Gastrocnemius medialis (tissue), 4 donors: ENCODE measurements at regions of chr17 and their contacts with region 1.

Region 1: DNA sequence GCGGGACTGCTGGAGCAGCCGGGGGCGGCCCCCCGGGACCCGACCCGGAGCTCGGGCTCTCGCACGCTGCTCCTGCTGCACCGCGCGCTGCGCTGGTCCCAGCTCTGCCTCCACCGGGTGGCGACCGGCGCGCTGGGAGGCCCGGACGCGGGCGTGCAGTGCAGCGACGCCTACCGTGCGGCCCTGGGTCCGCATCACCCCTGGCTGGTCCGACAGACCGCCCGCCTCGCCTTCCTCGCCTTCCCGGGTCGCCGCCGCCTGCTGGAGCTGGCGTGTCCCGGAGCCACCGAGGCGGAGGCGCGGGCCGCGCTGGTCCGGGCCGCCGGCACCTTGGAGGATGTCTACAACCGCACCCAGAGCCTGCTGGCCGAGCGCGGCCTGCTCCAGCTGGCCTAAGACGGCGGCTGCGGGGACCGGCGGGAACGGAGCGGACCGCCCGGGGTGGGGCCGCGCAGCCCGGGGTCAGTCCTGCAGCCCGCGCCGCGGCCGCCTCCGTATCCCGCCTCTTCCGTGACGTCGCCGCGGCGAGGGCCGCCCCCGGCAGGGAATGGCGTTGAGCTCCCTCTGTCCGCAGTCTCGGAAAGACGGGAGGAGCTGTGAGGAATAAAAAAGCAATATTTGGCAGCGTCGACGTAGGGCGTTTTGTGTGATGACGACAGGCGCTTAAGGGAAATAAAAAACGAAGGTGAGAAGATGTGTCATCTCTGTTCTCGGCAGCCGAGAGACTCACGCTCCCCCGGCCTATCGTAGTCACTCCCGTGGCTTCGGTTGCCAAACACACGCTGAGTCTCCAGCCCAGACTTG is 1.3 kb downstream of the GLTPD2 start:
- DNase-seq: peak; percentile 63 to 78
- ATAC-seq: peak; percentile 92 to 94
- H3K4me3 ChIP-seq: peak overlapping the region; percentile 63 to 81 (median 68)
- H3K27ac ChIP-seq: peak overlapping the region; percentile 91 to 97 (median 95)
- H3K4me1 ChIP-seq: peaks cover 36 to 43% of the 10 kb centered on the region in 2 donors
- H3K27me3 ChIP-seq: peaks cover 8 to 20% (median 13%) of the 10 kb centered on the region in 3 donors
- CTCF ChIP-seq: peak; percentile 68 to 93 (median 90)
- POLR2A ChIP-seq: peak; percentile 83 to 88

Region 2: DNA sequence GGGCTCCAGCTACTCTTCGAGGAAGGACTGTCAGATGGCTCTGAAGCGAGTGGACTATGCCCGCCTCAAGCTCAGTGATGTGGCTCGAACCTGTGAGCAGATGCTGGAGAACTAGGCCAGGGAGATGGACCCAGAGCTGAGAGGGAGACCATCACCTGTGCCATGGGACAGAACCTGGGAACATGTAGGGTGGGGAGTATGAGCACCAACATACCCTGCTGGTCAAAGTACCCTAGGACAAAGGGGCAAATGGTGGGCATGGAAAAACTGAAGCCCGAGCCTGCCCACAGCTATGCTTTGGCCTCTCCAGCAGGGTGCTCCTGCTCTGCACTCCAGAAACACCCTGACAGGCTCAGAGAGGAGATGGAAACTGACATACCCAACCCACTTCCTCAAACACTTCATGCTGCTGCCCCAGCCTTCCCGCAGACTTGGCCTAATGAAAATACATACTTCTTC is 57.0 kb before region 1 on chr17:
- in situ Hi-C with region 1: loop called in 1 of 4 experiments (anchors 10 kb)
- intact Hi-C with region 1: loop called (anchors 1 kb)
- DNase-seq: no peak
- ATAC-seq: no peak
- H3K4me3 ChIP-seq: no peak overlapping the region
- H3K27ac ChIP-seq: no peak overlapping the region
- H3K4me1 ChIP-seq: peaks cover 0 to 12% of the 10 kb centered on the region in 2 donors
- H3K27me3 ChIP-seq: peaks cover under 1 to 5% (median 2%) of the 10 kb centered on the region in 3 donors
- CTCF ChIP-seq: no peak
- POLR2A ChIP-seq: no peak

Region 3: DNA sequence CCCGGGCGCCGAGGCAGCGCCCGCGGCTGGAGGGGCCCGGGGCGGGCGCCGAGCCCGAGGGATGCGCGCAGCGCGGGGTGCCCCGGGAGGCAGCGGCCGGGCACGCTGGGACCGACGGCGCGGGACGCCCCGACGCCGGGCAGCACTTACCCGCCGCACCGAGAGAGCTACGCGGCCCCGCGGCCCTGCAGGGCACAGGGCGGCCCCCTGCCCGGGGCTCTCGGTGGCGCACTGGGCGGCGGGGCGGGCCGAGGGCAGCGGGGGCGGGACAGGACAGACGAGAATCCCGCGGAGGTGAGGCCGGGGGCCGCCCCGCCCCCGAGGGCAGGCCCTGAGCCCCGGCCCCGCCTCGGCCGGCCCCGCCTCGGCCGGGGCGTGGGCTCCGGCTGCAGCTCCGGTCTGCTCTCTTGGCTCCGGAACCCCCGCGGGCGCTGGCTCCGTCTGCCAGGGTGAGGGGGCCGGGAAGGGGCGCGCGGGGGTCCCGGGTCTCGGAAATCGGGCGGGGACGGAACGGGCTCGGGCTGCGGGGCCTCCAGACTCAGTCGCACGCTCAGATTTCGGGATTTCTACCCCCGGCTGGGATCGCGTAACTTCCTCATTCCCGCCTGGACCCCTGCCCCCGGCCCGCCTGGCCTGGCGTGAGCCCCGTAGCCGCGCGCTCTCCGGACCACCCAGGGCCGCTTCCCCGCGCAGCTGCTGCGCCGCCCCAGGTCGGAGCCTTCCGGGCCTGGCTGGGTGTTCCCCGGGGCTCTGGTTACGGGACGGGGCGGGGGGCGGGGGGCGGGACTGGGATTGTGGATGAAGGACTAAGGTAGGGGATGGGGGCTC is 16.9 kb after region 1 on chr17 and contains the start of gene PLD2:
- in situ Hi-C with region 1: no loop called
- intact Hi-C with region 1: loop called (anchors 1 kb)
- DNase-seq: peak; percentile 65 to 70
- ATAC-seq: peak; percentile 94 to 95
- H3K4me3 ChIP-seq: peak within 1 kb of the TSS; percentile 76 to 97 (median 81)
- H3K27ac ChIP-seq: peak within 1 kb of the TSS; percentile 70 to 81 (median 76)
- H3K4me1 ChIP-seq: peaks cover 9 to 23% of the 10 kb centered on the region in 2 donors
- H3K27me3 ChIP-seq: no peaks in the 10 kb centered on the region
- CTCF ChIP-seq: no peak
- POLR2A ChIP-seq: peak; percentile 34 to 50
- total RNA-seq, gene PLD2: 2.8 to 5.8 (median 4.2) TPM

Region 4: DNA sequence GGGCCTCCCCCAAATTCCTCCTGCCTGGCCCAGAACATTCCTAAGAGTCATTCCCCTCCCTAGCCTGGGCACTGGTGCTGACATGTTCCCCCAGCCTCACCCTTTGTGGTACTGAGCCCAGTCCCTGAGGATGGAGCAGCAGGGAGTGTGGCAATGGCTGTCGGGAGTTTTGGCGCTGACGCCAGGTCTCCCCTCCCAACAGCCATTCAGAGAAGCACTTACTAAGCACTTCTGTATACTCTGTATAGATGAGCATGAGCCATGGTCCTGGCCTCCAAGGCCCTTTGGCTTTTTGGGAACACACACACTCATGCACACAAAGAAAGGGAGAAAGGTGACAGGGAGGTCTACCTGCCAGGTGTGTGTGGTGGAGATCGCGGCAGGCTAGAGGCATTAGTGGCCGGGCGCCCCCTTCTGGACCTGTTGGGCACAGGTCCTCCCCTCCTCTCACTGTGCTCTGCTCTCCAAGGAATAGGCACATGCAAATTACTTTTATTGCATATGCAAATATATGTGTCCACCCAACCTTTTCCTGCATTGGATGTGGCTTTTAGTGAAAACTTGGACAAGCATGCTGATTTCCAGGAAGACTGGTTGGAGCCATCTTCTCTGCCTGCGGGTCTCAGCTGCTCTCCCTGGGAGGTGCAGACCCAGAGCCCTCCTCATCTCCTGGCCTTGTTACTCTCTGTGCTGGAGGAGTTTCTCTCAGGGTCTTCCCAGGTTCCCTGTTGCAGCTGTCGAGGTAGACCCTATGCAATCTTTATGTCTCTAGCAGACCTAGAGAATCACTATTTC is 91.9 kb after region 1 on chr17:
- in situ Hi-C with region 1: loop called (anchors 5 to 25 kb)
- intact Hi-C with region 1: no loop called
- DNase-seq: no peak
- ATAC-seq: peak in 1 of 2 donors; percentile 53
- H3K4me3 ChIP-seq: no peak overlapping the region
- H3K27ac ChIP-seq: no peak overlapping the region
- H3K4me1 ChIP-seq: no peaks in the 10 kb centered on the region
- H3K27me3 ChIP-seq: no peaks in the 10 kb centered on the region
- CTCF ChIP-seq: peak; percentile 54 to 82 (median 68)
- POLR2A ChIP-seq: no peak